ENCODE measurements at regions of chr17 and their contacts with region 1.

Region 1: GRCh38 chr17:16962818-16963217 is 9.1 kb downstream of the TNFRSF13B start:
- DNase-seq: no peak
- ATAC-seq: no peak
- H3K4me3 ChIP-seq: no peak overlapping the region
- H3K27ac ChIP-seq: no peak overlapping the region
- H3K4me1 ChIP-seq: no peaks in the 10 kb centered on the region
- H3K27me3 ChIP-seq: peaks cover 12% of the 10 kb centered on the region
- CTCF ChIP-seq: no peak
- POLR2A ChIP-seq: no peak
- RAD21 ChIP-seq: no peak

Region 2: DNA sequence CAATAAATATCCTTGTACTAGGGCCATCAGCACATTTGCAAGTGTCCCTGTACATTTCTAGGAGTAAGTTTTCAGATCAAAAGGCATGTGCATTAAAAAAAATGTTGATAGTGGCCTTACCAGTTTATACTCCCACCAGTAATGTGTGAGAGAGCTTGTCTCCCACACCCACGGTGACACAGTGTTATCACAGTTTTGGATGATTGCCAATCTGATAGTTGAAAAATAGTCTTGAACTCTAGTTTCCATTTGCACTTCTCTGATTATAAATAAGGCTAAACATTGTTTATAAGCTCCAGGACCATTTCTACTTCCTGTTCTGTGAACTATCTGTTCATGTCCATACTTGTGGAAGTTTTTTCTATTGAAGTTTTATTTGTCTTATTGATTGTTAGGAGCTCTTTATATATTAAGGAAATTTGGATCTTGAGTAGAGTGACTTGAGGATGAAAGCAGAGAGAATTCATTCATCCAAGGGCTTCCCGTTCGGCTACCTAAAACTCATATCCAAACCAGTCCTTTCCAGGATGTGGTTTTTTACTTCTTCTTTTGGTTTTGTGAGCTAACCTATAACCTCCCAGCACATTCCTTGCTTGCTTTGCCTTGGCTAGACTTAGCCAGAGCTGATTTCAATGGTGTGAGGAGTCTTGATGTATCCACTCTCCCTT is 53.5 kb after region 1 on chr17:
- CTCF ChIA-PET with region 1: no interaction called
- POLR2A ChIA-PET with region 1: no interaction called
- dilution Hi-C with region 1: no loop called
- in situ Hi-C with region 1: no loop called
- intact Hi-C with region 1: no loop called
- DNase-seq: no peak
- ATAC-seq: no peak
- H3K4me3 ChIP-seq: no peak overlapping the region
- H3K27ac ChIP-seq: no peak overlapping the region
- H3K4me1 ChIP-seq: peaks cover 6% of the 10 kb centered on the region
- H3K27me3 ChIP-seq: no peaks in the 10 kb centered on the region
- CTCF ChIP-seq: no peak
- POLR2A ChIP-seq: no peak
- RAD21 ChIP-seq: no peak

Region 3: DNA sequence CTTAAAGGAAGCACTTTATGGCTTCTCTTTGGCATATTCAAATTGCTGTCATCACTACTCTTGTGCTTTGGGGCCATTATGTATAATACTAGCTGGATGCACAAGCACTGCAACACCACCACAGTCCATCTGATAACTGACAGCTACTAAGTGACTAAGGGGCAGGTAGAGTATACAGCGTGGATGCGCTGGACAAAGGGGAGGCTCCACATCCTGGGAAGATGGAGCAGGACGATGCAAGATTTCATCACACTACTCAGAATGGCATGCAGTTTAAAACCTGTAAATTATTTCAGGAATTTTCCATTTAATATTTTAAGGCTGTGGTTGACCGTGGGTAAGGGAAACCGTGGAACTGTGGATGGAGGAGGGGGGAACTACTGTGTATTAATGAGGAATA is 104.4 kb after region 1 on chr17:
- CTCF ChIA-PET with region 1: no interaction called
- POLR2A ChIA-PET with region 1: interaction called, 11 read pairs
- dilution Hi-C with region 1: no loop called
- in situ Hi-C with region 1: no loop called
- intact Hi-C with region 1: no loop called
- DNase-seq: peak; percentile 55
- ATAC-seq: peak; percentile 70
- H3K4me3 ChIP-seq: no peak overlapping the region
- H3K27ac ChIP-seq: no peak overlapping the region
- H3K4me1 ChIP-seq: peaks cover 9% of the 10 kb centered on the region
- H3K27me3 ChIP-seq: no peaks in the 10 kb centered on the region
- CTCF ChIP-seq: no peak
- POLR2A ChIP-seq: no peak
- RAD21 ChIP-seq: no peak